K562 (cell line): ENCODE measurements at regions of chr2 and their contacts with region 1.

Region 1: GRCh38 chr2:121319953-121320352 is 35.0 kb upstream of the TFCP2L1 start:
- DNase-seq: no peak
- ATAC-seq: no peak
- H3K4me3 ChIP-seq: no peak overlapping the region
- H3K27ac ChIP-seq: no peak overlapping the region
- H3K4me1 ChIP-seq: no peaks in the 10 kb centered on the region
- H3K27me3 ChIP-seq: peaks cover 5 to 40% of the 10 kb centered on the region in 2 experiments; a peak in 4 of 5 replicates
- CTCF ChIP-seq: no peak
- EP300 ChIP-seq: no peak
- POLR2A ChIP-seq: no peak
- RAD21 ChIP-seq: no peak

Region 2: DNA sequence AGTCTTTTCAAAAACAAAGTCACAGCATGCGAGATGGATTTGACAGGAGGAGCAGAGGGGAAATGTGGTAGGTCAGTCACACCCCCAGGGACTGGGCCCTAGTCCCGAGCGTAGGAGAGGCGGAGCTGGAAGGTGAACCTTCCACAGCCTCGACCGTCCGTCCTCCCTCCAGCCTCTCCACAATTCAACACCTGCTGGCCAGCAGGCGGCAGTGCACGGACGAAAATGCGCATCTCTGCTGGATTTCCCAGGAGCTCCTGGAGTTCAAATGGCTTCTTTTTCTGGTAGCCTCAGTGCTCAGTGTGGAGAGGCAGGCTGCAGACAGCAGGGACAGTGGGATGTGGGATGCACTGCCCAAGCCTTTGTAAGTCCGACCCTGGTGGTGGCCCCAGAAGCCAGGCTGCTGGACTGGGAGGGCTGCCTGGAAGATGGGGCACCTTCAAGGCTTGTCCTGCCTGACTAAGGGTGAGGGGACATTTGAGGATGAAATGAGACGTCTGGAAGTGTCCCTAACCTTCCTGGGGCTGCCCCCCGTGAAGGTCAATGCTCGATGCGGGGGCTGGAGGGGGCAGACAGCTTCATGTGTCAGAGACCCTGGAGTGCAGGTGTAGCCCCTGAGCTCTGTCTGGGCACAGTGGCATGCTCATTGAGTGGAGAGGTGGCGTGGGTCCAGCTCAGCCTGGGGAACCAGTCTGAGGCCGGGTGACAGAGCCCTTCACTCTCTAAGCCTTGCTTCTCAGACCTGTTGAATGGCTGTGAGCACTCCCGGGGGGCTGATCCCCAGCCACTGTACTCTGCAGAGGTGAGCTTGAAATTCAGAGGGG is 224.5 kb before region 1 on chr2:
- CTCF ChIA-PET with region 1: no interaction called
- POLR2A ChIA-PET with region 1: no interaction called
- in situ Hi-C with region 1: loop called (anchors 10 kb)
- intact Hi-C with region 1: loop called (anchors 5 kb)
- DNase-seq: peak; percentile 68 to 74 (median 72)
- ATAC-seq: peak; percentile 97
- H3K4me3 ChIP-seq: no peak overlapping the region
- H3K27ac ChIP-seq: no peak overlapping the region
- H3K4me1 ChIP-seq: no peaks in the 10 kb centered on the region
- H3K27me3 ChIP-seq: peaks cover under 1 to 31% of the 10 kb centered on the region in 2 experiments; a peak in 3 of 5 replicates
- CTCF ChIP-seq: peak; percentile 76 to 85 (median 85)
- EP300 ChIP-seq: no peak
- POLR2A ChIP-seq: no peak
- RAD21 ChIP-seq: peak; percentile 61 to 86

Region 3: DNA sequence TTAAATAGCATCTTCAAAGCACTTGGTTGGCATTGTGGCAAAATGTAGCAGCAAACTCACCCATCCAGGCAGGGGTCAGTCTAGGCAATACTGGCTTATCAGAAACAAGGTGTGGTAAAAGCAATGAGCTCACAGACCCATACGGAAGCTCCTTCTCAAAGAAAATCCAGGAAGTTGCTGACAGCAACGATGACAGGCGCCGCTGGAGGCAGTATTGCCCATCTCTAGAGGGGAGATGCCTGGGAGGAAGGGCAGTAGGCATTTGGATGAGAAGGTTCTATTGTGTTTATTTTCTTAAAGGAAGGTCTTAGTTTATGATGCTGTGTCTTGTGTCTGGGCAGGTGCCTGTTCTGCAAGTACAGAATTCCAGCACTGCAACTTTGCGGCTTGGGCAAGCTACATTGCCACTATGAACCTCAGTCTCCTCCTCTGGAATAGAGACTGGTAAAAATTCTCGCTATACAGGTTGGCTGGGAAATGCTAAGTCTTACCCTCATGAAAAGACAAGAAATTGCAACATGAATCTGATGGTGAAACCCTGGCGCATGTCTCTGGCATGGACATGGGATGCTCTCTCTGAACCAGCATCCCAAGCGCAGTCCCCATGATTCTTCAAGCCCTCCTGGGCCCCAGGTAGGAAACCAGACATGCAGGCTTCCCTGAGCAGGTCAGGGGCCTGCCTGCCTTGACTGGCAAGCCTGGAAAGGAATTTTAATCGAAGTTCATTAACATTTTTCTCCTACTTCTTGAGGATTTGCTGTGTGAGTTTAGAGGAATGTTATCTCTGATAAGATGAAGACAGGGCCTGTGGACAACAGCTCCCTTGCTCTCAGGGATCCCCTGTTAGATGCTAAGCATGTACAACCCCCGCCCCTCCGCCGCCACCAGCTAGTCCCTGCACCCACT is 190.9 kb before region 1 on chr2:
- CTCF ChIA-PET with region 1: interaction called, 8 read pairs
- POLR2A ChIA-PET with region 1: no interaction called
- in situ Hi-C with region 1: no loop called
- intact Hi-C with region 1: loop called (anchors 2 kb)
- DNase-seq: peak; percentile 46 to 68 (median 55)
- ATAC-seq: peak; percentile 92
- H3K4me3 ChIP-seq: no peak overlapping the region
- H3K27ac ChIP-seq: no peak overlapping the region
- H3K4me1 ChIP-seq: no peaks in the 10 kb centered on the region
- H3K27me3 ChIP-seq: peaks cover 0 to 24% of the 10 kb centered on the region in 2 experiments; a peak in 4 of 5 replicates
- CTCF ChIP-seq: peak; percentile 80 to 89 (median 85)
- EP300 ChIP-seq: no peak
- POLR2A ChIP-seq: no peak
- RAD21 ChIP-seq: peak; percentile 65 to 75